Left colon (tissue), 2 donors: ENCODE measurements at regions of chr7 and their contacts with region 1.

Region 1: GRCh38 chr7:85023045-85023712 is 163.7 kb downstream of the SEMA3D start:
- DNase-seq: no peak
- ATAC-seq: no peak

Region 2: GRCh38 chr7:83936056-83936708 is 1087.0 kb before region 1 on chr7:
- intact Hi-C with region 1: loop called in 1 of 2 experiments (anchors 2 kb)
- DNase-seq: peak; percentile 26 to 47
- ATAC-seq: peak; percentile 62

Region 3: GRCh38 chr7:83976295-83976694 is 1046.9 kb before region 1 on chr7:
- intact Hi-C with region 1: loop called in 1 of 2 experiments (anchors 5 kb)
- DNase-seq: no peak
- ATAC-seq: peak; percentile 70

Region 4: DNA sequence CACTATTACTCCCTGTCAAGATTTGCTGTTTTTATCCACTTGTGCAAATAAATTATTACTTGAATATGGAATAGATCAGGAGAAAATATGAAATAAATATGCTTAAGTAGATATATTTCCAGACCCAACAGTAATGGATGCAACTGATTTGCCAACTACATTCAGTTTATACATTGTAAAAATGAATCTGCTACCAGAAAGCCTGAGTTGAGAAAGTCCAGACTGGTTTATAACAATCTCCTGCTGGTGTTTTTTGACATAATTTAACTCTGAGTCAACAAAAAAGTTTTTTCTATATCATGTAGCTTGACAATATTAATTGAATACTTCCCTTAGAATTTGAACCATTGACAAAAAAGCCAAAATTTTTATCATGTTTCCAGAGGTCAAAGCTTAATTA is 429.5 kb after region 1 on chr7:
- intact Hi-C with region 1: no loop called
- DNase-seq: no peak
- ATAC-seq: no peak